Ovary (tissue), 10 donors: ENCODE measurements at regions of chr12 and their contacts with region 1.

Region 1: DNA sequence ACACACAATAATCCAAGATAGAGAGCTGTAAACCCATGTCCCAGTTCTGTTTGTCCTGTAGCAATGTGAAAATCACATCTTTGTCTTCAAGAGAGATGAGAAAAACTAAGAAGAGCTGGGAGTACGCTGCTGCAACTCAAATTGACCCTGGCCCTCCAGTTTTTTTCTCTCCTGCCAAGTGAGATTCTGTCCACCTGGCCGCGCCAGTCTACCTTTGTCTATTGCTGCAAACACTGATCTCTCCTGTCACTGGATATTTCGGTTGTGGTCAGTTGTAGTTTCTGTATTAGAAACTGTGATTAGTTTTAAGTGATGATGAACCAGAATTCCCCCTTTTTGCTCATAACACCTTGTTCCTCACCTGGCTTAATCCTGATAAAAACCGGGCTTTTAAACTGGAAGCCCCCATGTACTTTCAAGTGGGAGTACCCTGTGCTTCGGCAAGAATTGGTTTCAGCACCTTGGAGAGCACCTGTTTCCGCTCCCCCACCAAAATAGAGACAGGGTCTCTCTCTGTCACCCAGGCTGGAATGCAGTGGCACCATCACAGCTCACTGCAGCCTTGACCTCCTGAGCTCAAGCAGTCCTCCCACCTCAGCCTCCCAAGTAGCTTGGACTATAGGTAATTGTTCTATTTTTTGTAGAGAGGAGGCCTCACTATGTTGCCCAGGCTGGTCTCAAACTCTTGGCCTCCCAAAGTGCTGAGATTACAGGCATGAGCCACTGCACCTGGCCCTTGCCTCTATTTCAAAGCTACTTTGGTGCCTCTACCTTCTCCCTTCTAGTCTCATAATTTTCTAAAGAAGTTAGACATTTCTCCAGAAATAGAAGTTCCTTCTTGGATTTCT is 156.8 kb downstream of the PHETA1 start:
- DNase-seq: no peak
- H3K4me3 ChIP-seq: no peak overlapping the region
- H3K27ac ChIP-seq: no peak overlapping the region
- H3K4me1 ChIP-seq: no peaks in the 10 kb centered on the region
- H3K27me3 ChIP-seq: no peaks in the 10 kb centered on the region
- CTCF ChIP-seq: no peak
- EP300 ChIP-seq: no peak
- POLR2A ChIP-seq: no peak

Region 2: GRCh38 chr12:110733089-110733715 is 478.9 kb before region 1 on chr12:
- intact Hi-C with region 1: no loop called
- DNase-seq: peak in 1 of 5 donors; percentile 26
- H3K4me3 ChIP-seq: no peak overlapping the region
- H3K27ac ChIP-seq: no peak overlapping the region
- H3K4me1 ChIP-seq: peaks cover 19% of the 10 kb centered on the region
- H3K27me3 ChIP-seq: no peaks in the 10 kb centered on the region
- CTCF ChIP-seq: no peak
- EP300 ChIP-seq: no peak
- POLR2A ChIP-seq: no peak

Region 3: DNA sequence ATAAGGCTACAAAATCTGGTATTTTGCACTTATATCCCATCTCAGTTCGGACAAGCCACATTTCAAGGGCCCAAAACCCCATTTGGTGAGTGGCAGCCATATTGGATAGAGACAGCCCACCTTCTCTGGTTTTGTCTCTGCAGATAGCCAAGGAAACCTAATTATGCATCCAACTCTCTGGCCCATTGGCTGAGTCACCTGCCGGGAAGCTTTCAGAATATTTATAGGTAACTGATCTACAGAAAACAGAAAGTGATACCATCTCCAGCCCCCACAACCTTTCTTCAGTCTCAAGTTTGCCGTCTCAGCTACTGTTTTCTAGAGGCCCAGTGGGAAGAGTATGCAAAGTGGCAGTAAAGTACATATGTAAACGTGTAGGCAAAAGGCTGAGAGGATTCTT is 435.7 kb before region 1 on chr12:
- intact Hi-C with region 1: loop called in 1 of 4 experiments (anchors 10 kb)
- DNase-seq: no peak
- H3K4me3 ChIP-seq: no peak overlapping the region
- H3K27ac ChIP-seq: no peak overlapping the region
- H3K4me1 ChIP-seq: no peaks in the 10 kb centered on the region
- H3K27me3 ChIP-seq: no peaks in the 10 kb centered on the region
- CTCF ChIP-seq: no peak
- EP300 ChIP-seq: no peak
- POLR2A ChIP-seq: no peak

Region 4: DNA sequence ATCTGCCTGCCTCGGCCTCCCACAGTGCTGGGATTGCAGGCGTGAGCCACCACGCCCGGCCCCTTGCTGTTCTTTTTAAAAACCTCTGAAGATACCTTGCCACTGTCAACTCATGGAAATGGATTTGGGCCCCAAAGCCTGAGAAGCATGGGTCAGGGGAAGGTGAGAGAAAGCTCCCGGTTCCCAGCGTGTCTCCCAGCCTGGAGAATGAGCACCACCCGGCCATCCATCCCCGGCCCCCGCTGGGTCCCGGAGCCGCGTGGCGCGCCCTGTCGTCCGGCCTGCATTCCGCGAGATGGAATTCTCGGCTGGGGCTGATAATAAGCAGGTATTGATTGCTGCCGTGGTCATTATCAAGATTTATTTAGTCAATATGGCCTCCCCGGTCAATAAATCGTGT is 165.2 kb before region 1 on chr12:
- intact Hi-C with region 1: loop called in 1 of 4 experiments (anchors 10 kb)
- DNase-seq: no peak
- H3K4me3 ChIP-seq: no peak overlapping the region
- H3K27ac ChIP-seq: no peak overlapping the region
- H3K4me1 ChIP-seq: no peaks in the 10 kb centered on the region
- H3K27me3 ChIP-seq: no peaks in the 10 kb centered on the region
- CTCF ChIP-seq: no peak
- EP300 ChIP-seq: no peak
- POLR2A ChIP-seq: no peak

Region 5: GRCh38 chr12:111424793-111425251 is 212.7 kb after region 1 on chr12:
- intact Hi-C with region 1: no loop called
- DNase-seq: no peak
- H3K4me3 ChIP-seq: no peak overlapping the region
- H3K27ac ChIP-seq: no peak overlapping the region
- H3K4me1 ChIP-seq: peaks cover 3% of the 10 kb centered on the region
- H3K27me3 ChIP-seq: no peaks in the 10 kb centered on the region
- CTCF ChIP-seq: no peak
- EP300 ChIP-seq: no peak
- POLR2A ChIP-seq: no peak